Dorsolateral prefrontal cortex (tissue), 120 donors: ENCODE measurements at regions of chr3 and their contacts with region 1.

Region 1: DNA sequence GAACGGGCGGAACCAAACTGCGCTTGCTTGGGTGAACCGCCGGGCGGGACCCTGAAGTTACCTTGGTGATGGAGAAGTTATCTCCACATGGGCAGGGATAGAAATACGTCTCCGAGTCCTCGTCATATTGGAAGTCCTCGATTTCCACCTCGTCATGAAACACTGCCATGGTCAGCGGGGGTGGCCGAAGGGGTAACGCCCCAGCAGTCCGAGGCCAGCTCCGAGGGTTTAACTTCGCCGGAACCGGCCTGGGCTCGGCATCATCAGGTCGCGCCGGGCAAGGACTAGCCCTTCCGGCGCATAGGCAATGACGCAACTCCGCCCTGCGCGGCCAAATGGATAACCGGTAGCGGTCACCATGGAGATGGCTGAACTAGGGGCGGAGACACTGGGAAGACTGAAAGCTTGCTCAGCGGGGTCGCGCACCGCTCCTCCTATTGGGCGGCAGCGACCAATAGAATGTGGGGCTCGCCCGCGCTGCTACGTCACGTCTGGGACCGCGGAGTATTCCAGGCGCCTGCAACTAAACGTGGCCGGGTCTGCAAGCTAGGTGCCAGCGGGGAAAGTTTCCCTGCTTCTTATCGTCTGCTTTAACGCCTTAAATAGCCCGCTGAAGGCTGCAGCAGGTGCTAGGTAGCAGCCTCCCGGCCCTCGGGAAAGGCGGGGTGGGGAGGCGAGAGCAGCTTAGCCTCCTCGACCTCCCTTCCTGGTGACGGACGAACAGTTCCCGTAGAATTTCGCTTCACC is at the starts of genes DPH3 and OXNAD1:
- DNase-seq: peak; percentile 98 to 100 (median 99)
- H3K4me3 ChIP-seq: peak within 1 kb of the TSS; percentile 65 to 100 (median 89)
- H3K27ac ChIP-seq: peak within 1 kb of the TSS in 58 of 59 donors; percentile 34 to 92 (median 82)
- H3K27me3 ChIP-seq: no peaks in the 10 kb centered on the region
- CTCF ChIP-seq: peak in 37 of 56 donors; percentile 6 to 65 (median 34)
- total RNA-seq, gene DPH3: 12.7 to 30.0 (median 19.6) TPM
- total RNA-seq, gene OXNAD1: 16.6 to 37.5 (median 26.2) TPM

Region 2: GRCh38 chr3:15820911-15821310 is 444.0 kb before region 1 on chr3:
- intact Hi-C with region 1: loop called in 1 of 2 experiments (anchors 5 kb)
- DNase-seq: no peak
- H3K4me3 ChIP-seq: no peak overlapping the region
- H3K27ac ChIP-seq: peak overlapping the region in 12 of 59 donors; percentile 2 to 26 (median 10)
- H3K27me3 ChIP-seq: no peaks in the 10 kb centered on the region
- CTCF ChIP-seq: peak in 12 of 56 donors; percentile 5 to 22 (median 16)

Region 3: DNA sequence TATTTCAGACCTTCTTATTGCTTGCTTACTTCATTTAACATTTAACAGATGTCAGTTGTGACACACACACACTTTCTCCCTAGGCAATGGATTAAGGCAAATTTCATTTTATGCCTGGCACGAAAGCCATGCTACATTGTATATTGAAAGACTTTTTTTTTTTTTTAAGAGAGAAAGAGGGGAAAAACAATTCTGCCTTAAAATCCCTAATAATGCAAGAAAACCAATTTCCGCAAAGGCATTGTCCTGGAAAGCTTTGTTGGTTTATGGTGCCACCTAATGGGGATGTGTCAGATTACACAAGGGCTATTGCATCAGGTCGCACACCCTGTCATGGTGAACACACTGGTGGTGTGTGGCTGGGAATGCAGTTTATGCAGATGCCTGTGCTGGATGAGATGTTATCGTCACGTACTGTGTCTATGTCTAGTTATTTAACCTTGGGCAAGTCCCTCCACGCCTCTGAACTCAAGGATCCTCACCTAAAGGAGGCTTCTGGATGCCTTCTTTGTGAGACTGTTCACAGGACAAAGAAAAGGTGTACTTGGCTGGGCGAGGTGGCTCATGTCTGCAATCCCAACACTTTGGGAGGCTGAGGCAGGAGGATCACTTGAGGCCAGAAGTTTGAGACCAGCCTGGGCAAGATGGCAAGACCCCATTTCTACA is 285.9 kb after region 1 on chr3:
- intact Hi-C with region 1: loop called in 1 of 2 experiments (anchors 5 kb)
- DNase-seq: peak in 7 of 10 donors; percentile 31 to 77 (median 53)
- H3K4me3 ChIP-seq: peak overlapping the region in 49 of 59 donors; percentile 8 to 56 (median 33)
- H3K27ac ChIP-seq: no peak overlapping the region
- H3K27me3 ChIP-seq: no peaks in the 10 kb centered on the region
- CTCF ChIP-seq: peak; percentile 54 to 97 (median 91)